Heart left ventricle (tissue), 16 donors: ENCODE measurements at regions of chr9 and their contacts with region 1.

Region 1: DNA sequence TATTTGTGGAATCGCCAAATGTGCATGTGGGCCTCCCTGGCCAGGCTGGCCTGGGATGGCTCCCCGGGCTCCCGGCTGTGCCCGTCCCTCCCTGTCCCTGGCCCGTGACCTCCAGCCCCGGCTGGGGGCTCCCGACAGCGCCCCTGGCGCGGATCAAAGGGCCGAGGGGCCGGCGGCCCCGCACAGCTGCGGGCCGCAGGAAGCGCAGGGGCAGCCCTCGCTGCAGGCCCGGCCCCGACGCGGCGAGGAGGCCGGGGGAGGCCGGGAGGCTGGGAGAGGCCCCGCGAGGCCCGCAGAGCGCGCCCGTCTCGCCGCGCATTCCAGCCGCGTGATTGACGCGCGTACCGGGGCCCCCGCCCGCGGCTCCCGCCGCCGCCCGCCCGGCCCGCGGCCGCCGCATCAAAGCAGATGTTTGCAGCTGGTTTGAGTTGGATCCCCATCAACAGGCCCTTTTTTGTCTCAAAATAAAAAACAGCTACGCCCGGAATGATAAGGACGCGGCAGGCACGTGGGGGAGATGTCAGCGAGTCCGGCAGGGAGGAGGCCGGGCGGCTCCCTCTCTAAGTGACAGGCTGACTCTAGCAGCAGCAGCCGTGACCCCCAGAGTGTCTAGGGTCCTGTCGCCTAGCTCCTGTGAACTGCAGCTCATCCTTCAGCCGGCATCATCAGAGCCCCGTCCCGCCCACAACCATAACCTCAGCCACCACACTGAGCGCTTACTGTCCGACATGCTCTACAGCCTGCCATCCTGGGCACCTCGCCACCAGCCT is 69.4 kb downstream of the LMX1B start:
- DNase-seq: peak in 4 of 5 donors; percentile 27 to 68 (median 42)
- ATAC-seq: peak in 3 of 4 donors; percentile 13 to 71 (median 36)
- H3K4me3 ChIP-seq: peak overlapping the region in 9 of 12 donors; percentile 10 to 43 (median 25)
- H3K27ac ChIP-seq: no peak overlapping the region
- H3K4me1 ChIP-seq: peaks cover 0 to 12% (median 0%) of the 10 kb centered on the region in 12 donors
- H3K27me3 ChIP-seq: peaks cover 0 to 66% (median 35%) of the 10 kb centered on the region in 9 donors
- CTCF ChIP-seq: no peak
- POLR2A ChIP-seq: no peak

Region 2: DNA sequence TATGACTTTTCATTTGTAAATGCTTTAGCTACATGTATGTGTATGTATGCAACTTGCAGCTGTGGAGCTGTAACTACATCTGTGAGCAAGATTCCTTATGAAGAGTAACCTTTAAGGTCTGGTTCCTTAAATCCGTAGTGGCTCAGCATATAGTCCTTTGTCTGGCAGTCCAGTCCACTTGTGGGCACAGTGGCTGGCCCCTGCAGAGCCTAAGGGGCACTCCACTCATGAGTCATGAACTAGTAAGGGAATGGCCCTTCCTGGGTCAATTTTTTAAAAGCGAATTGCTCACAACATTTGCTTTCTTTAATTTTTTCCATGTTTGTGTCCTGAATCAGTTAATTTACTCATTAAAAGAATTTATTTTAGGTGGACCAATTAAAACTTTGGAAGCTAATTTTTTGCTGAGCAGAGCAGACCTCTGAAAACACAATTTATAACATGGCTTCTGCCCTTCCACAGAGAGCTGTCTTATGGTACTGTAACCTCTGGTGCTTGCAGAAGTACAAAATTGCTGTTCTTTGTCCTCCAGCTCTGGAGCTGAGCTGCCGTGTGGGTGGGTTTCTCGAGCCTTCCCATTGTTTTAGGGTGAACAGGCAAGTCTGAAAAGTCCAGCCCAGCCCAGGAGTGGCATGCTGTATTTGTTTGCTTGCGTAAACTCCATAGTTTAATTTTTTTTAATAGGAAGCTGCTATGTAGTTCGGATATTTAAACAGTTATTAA is 246.4 kb before region 1 on chr9:
- intact Hi-C with region 1: no loop called
- DNase-seq: no peak
- ATAC-seq: no peak
- H3K4me3 ChIP-seq: no peak overlapping the region
- H3K27ac ChIP-seq: no peak overlapping the region
- H3K4me1 ChIP-seq: no peaks in the 10 kb centered on the region
- H3K27me3 ChIP-seq: no peaks in the 10 kb centered on the region
- CTCF ChIP-seq: no peak
- POLR2A ChIP-seq: no peak

Region 3: DNA sequence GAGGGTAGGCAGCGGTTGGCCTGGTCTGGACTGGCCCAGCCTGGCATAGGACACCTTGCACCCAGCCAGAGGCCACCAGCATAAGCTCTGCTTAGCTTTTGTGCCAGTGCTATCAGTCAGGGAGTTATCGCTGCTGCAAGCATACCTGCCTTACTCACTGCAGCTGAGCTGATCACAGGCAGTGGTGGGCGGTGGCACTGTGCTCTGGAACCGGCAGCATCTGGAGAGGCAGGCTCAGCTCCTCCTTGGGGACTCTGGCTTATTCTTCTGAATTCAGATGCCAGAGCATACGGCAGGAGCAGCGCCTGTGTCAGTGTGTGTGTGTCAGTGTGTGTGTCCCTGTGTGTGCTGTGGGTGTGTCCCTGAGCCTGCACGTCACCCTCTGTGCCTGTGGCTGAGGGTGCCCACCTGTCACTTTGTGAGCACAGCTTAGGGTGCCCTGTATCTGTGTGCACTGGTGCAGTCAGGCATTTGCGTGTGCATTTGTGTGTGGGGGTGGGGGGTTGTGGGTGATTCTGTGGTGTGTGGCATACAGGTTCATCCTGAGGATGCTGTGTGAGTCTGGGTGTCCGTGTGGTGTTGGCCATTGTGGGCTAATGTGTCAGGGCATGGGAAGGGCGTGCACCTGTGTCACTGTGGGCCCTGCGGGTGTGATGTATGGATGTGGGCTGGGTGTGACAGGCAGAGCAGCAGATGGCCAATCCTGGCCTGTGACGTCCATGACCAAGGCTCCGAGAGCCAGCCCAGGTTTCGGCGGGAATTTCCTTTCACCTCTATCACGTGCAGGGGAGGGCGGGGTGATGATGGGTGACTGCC is 45.9 kb before region 1 on chr9:
- intact Hi-C with region 1: loop called in 1 of 10 experiments (anchors 10 kb)
- DNase-seq: no peak
- ATAC-seq: no peak
- H3K4me3 ChIP-seq: no peak overlapping the region
- H3K27ac ChIP-seq: no peak overlapping the region
- H3K4me1 ChIP-seq: peaks cover 0 to 11% (median 6%) of the 10 kb centered on the region in 12 donors
- H3K27me3 ChIP-seq: peaks cover 13 to 75% (median 34%) of the 10 kb centered on the region in 9 donors
- CTCF ChIP-seq: no peak
- POLR2A ChIP-seq: no peak